ENCODE measurements at regions of chr3 and their contacts with region 1.

Region 1: DNA sequence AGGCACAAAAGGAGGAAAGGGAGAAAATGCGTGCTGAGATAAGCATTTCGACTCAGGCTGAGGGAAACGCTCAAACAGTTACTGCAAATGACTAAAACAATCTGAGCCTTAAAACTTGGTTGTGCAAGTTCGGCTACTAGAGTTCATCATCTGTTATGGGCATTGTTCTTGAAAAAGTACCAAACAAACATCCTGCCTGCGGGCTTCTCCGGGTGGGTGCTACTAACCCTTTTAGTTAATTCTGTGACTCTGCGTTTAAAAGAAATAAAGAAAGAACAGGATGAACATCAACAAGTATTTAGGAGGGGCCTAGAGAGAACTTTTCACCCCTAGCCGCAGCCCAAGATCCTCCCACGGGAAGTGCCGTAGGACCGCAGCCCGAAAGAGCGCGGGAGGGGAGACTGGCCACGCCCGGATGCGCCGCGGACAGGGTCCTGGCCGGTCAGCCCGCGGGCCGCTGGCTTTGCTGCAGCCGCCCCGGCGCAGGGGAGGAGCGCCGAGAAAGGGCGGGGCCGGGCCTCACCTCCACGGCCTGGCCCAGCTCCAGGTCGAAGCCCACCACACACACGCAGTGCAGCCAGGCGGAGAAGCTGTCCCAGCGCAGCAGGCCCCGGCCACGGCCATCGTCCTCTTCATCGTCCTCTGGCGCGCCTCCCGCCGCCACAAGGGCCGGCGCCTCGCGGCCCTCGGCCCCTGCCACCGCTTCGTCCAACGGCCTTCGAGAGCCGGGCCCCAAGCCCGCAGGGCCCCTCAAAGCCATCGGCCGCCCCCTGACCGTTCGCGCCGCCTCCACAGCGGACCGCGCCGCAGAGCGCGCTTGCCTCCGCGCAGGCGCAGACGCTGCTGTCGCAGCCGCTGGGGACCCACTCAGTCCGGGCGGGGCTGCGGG is at the start of gene DENND6A:
- DNase-seq: peak; percentile 98
- H3K4me3 Mint-ChIP-seq: peak within 1 kb of the TSS; percentile 87
- H3K27ac Mint-ChIP-seq: peak within 1 kb of the TSS; percentile 96
- H3K4me1 Mint-ChIP-seq: peaks cover 22% of the 10 kb centered on the region
- H3K27me3 Mint-ChIP-seq: no peaks in the 10 kb centered on the region
- total RNA-seq, gene DENND6A: 20.8 and 25.2 TPM in 2 replicates

Region 2: GRCh38 chr3:56682462-56683121 is 1009.9 kb before region 1 on chr3:
- intact Hi-C with region 1: loop called (anchors 2 kb)
- DNase-seq: peak; percentile 94
- H3K4me3 Mint-ChIP-seq: peak overlapping the region; percentile 100
- H3K27ac Mint-ChIP-seq: peak overlapping the region; percentile 99
- H3K4me1 Mint-ChIP-seq: peaks cover 29% of the 10 kb centered on the region
- H3K27me3 Mint-ChIP-seq: no peaks in the 10 kb centered on the region

Region 3: DNA sequence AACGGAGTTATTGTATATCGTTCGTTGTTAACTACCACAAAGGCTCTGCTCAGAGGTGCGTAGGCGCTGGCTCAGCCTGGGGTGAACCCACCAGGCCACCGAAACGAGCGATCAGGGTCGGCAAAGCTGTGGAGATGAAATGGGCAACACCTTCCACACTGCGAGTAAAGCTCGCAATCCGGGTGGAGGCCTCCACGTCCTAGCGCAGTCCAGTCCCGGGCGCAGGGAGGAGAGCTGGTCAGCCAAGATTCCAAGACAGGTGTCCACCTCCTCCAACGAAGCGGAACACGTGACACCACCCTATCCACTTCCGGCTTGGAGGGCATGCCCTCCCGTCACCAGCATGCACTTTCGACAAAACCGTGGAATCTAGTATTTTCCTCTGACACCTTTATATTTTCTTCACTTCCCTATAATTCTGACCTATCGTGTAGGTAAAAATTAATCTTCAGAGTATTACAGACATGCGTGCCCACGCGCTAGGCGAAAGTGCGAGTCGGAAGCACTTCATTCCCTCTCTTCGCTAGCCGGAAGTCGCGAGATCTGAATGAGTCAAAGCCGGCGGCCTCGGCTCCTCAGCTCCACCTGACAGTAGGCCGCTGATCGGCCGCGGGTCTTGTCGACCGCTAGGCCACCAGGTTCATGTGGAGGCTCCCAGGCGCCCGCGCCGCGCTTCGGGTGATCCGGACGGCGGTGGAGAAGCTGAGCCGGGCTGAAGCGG is 136.6 kb before region 1 on chr3 and contains the start of gene PDE12:
- intact Hi-C with region 1: loop called (anchors 5 kb)
- DNase-seq: peak; percentile 94
- H3K4me3 Mint-ChIP-seq: peak within 1 kb of the TSS; percentile 79
- H3K27ac Mint-ChIP-seq: peak within 1 kb of the TSS; percentile 97
- H3K4me1 Mint-ChIP-seq: peaks cover 32% of the 10 kb centered on the region
- H3K27me3 Mint-ChIP-seq: no peaks in the 10 kb centered on the region
- total RNA-seq, gene PDE12: 34.4 TPM in 2 replicates

Region 4: DNA sequence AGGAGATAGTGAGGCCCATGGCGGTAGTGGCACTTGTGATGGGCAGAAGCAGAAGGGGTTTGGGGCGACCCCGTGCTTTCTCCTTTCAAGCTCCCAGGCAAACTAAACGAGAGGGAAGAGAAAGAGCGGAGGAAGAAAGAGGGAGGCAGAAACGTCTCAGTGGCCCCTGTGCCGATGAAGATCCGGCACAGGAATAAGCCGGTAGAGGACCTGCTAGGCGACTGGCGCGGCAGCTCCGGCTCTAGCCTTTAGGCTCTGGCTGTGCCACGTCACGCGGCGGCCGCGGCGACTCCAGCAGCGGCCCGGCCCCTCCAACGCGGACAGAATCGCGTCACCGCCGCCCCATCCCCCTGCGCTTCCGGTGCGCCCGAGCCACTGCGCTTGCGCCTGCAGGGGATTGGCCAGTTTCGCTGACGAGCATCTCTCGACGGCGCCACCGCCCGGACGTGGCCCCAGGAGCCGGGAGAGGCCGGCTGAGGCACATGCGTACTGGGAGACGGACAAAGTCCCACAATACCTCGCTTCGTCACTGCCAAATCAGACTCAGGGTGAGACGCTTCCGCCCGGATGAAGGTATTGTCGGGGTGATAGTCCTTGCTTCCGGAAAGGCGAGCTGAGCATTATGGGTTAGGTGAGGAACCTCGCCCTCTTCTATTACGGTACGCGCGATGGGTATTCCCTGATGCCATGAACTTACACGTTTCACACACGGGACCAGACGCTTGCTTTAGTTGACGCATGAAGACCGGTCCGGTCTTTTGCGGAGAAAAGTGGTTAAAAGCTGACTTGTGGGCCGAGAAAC is 95.2 kb before region 1 on chr3 and contains the start of gene ARF4:
- intact Hi-C with region 1: loop called (anchors 1 kb)
- DNase-seq: peak; percentile 100
- H3K4me3 Mint-ChIP-seq: peak within 1 kb of the TSS; percentile 87
- H3K27ac Mint-ChIP-seq: peak within 1 kb of the TSS; percentile 99
- H3K4me1 Mint-ChIP-seq: peaks cover 32% of the 10 kb centered on the region
- H3K27me3 Mint-ChIP-seq: no peaks in the 10 kb centered on the region
- total RNA-seq, gene ARF4: 84.4 and 91.4 TPM in 2 replicates

Region 5: GRCh38 chr3:57670543-57670942 is 22.0 kb before region 1 on chr3:
- intact Hi-C with region 1: loop called (anchors 2 kb)
- DNase-seq: no peak
- H3K4me3 Mint-ChIP-seq: no peak overlapping the region
- H3K27ac Mint-ChIP-seq: no peak overlapping the region
- H3K4me1 Mint-ChIP-seq: peaks cover 24% of the 10 kb centered on the region
- H3K27me3 Mint-ChIP-seq: no peaks in the 10 kb centered on the region

Measured in activated CD4-positive, alpha-beta T cell treated with anti-CD3 and anti-CD28 coated beads, Interleukin-2, amount 10 ng/mL, durations not matched to agents 24 days and 14 days (primary cell).